ENCODE measurements at regions of chr14 and their contacts with region 1.

Region 1: DNA sequence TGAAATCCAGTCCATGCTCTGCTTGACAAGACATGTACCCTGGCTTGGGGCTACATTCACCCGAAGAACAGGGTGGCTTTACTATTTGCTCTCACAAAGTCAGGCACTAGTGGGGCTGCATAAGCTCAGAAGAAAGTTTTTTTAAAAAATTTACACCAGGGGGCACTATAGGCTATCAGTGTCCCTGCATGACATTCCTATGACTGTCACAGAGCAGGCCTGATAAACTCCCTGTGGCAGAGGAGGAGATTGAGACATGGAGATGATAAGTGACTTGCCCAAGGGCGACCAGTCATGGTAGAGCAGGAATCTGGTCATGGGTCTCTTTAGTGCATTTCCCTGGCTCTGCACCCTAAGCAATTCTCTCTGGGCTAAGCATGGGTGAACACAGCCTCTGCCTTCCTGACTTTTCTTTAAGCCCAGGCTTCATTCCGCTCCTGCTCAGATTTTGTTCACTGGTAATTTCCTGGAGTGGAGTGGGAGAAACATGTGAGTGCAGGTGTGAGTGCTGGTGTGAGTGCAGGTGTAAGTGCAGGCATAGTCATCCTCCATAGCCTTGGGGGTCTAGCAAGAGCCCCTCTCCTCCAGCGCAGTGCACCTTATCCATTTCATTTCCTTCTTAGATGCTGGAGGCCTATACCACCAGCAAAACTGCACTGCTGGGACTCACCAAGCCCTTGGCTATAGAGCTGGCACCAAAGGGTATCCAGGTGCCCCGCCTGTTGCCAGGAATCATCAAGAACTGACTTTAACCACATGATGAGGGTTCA is 91.6 kb downstream of the DHRS2 start:
- DNase-seq: no peak
- ATAC-seq: peak; percentile 57
- H3K4me3 Mint-ChIP-seq: no peak overlapping the region
- H3K27ac Mint-ChIP-seq: no peak overlapping the region
- H3K4me1 Mint-ChIP-seq: no peaks in the 10 kb centered on the region
- H3K27me3 Mint-ChIP-seq: peaks cover 4% of the 10 kb centered on the region

Region 2: GRCh38 chr14:23910101-23910875 is 182.5 kb after region 1 on chr14:
- CTCF ChIA-PET with region 1: interaction called, 3 read pairs
- POLR2A ChIA-PET with region 1: no interaction called
- intact Hi-C with region 1: loop called (anchors 1 kb)
- DNase-seq: peak; percentile 46
- ATAC-seq: no peak
- H3K4me3 Mint-ChIP-seq: no peak overlapping the region
- H3K27ac Mint-ChIP-seq: no peak overlapping the region
- H3K4me1 Mint-ChIP-seq: no peaks in the 10 kb centered on the region
- H3K27me3 Mint-ChIP-seq: peaks cover 18% of the 10 kb centered on the region

Region 3: DNA sequence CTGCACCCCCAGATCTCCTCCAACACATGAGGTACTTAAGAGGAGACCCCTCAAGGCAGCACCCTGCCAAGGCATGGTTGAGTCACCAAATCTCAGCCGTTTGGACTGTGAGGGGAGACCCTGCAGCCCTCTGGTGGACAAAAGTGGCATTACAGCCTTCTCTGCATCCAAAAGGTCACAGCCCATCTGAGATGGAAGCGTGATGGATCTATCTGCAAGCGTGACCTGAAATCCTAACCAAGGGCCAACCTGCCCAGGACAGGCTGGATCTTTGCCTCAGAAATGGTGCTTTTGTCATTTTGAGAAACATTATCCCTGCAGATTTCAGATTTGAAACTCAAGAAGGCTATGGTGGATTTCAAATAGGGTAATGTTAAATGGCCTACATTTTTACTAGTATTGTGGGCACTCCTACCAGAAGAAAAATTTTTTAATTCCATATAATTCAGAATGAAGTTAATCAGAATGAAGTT is 202.1 kb after region 1 on chr14:
- CTCF ChIA-PET with region 1: interaction called, 13 read pairs
- POLR2A ChIA-PET with region 1: no interaction called
- intact Hi-C with region 1: loop called (anchors 1 kb)
- DNase-seq: peak; percentile 91
- ATAC-seq: peak; percentile 91
- H3K4me3 Mint-ChIP-seq: no peak overlapping the region
- H3K27ac Mint-ChIP-seq: no peak overlapping the region
- H3K4me1 Mint-ChIP-seq: no peaks in the 10 kb centered on the region
- H3K27me3 Mint-ChIP-seq: no peaks in the 10 kb centered on the region

Region 4: DNA sequence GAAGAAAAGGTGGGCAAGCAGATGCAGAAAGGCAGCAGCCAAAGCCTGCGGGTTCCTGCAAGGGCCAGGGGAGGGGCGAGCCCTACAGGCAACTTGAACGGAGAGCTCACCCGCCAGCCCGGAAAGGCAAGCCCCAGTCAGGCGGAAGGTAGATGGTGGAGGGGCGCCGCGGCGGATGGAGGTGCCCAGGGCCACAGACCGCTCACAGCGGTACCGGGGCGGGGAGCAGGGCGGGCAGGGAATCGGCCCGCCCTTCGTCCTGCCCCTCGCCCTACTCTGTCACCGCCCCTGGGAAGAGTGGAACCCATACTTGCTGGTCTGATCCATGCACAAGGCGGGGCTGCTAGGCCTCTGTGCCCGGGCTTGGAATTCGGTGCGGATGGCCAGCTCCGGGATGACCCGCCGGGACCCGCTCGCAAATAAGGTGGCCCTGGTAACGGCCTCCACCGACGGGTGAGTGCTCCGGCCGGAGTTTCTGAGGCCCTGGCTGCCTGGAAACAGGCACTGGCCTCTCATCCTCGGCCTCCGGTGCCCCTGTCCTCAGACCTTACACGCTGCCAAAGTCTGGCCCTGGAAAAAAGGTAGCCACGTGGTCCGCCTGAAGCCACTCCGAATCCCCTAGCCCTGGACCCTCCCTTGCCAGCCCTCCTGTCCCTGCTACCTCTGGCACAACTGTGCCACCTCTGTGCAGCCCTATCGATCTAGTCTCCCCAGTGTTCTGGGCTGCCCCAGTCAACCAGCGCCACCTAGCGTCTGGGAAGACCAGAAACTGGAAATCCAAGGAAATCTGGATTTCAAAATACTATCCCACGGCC is 225.9 kb after region 1 on chr14 and contains the start of gene DHRS4:
- CTCF ChIA-PET with region 1: no interaction called
- POLR2A ChIA-PET with region 1: no interaction called
- intact Hi-C with region 1: loop called (anchors 1 kb)
- DNase-seq: peak; percentile 89
- ATAC-seq: peak; percentile 96
- H3K4me3 Mint-ChIP-seq: peak within 1 kb of the TSS; percentile 88
- H3K27ac Mint-ChIP-seq: peak within 1 kb of the TSS; percentile 93
- H3K4me1 Mint-ChIP-seq: peaks cover 23% of the 10 kb centered on the region
- H3K27me3 Mint-ChIP-seq: no peaks in the 10 kb centered on the region
- total RNA-seq, gene DHRS4: 32.2 to 36.2 TPM